Right ventricle myocardium superior (tissue), 1 donor: ENCODE measurements at regions of chr4 and their contacts with region 1.

Region 1: GRCh38 chr4:143482840-143483239 is 30.7 kb upstream of the SMARCA5 start:
- DNase-seq: no peak
- ATAC-seq: peak; percentile 69

Region 2: GRCh38 chr4:143202824-143203223 is 280.0 kb before region 1 on chr4:
- intact Hi-C with region 1: loop called (anchors 5 kb)
- DNase-seq: no peak
- ATAC-seq: no peak